ENCODE measurements at regions of chr3 and their contacts with region 1.

Region 1: DNA sequence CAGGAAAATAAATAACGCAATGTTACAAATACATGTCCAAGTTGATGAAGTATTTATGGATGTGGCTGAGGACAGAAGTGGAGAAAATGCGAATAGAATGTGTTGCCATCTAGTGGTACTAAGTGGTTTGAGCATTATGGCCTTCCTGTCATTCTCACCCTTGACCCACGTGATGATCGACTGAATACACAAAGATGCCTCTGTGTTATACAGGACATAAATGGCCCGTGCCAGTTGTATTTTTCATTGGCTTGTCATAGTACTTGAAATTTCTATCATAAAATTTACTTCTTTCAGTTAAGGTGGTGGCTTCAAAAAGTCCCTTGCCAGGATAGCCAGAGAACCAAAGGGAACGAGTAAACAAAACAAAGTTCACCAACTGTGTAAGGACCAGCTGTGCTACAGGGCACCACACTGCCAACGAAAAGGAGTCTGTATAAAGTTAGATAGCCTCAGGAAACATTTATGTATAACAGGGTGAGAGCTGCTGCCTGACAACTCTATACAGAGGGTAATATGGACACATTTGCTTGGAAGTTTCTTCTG is 103.7 kb downstream of the MYH15 start:
- DNase-seq: peak in 1 of 2 donors; percentile 79
- ATAC-seq: peak; percentile 92 to 99 (median 99)
- H3K4me3 ChIP-seq: no peak overlapping the region
- H3K4me3 Mint-ChIP-seq: no peak overlapping the region
- H3K27ac ChIP-seq: no peak overlapping the region
- H3K27ac Mint-ChIP-seq: peak overlapping the region in 1 of 2 donors; percentile 24
- H3K4me1 ChIP-seq: no peaks in the 10 kb centered on the region
- H3K4me1 Mint-ChIP-seq: peaks cover 6% of the 10 kb centered on the region in 2 donors
- H3K27me3 ChIP-seq: no peaks in the 10 kb centered on the region
- H3K27me3 Mint-ChIP-seq: peaks cover 0 to 5% of the 10 kb centered on the region in 2 donors
- CTCF ChIP-seq: peak; percentile 70

Region 2: DNA sequence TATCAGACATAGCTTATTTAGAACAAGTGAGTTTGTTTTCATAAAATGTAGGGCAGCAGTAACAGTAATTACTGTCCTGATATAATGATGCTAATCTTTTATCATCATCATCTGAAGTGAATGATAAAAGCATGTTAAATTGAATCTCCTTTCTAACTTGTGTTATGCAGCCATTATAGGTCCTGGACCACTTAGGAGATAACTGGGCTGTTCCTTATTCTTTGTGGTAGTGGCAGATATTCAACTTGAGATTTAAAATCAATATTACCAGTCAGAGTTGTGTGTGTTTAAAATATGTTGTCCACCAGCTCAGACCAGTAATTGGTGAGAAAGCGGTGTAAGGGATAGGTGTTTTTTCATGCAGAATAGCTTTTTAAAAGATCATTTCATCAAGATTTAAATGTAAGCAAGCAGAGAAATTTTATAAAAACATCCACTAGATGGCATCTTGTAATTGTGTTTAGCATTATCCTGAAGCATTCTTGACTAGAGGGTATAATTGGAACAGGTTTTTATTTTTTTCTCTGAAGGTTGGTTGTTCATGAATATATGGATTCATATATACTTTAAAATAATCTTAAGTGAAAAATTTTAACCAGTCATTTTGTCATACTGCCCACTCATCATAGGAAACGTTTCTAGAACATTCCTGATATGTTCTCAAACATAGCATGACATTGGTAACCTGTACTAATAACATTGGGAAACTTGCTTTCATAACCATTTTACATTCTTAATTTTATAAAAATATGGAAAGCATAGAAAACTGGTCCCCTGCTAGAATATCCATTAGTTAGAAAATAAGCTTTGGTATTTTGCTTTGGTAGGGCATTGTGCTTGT is 730.0 kb before region 1 on chr3:
- intact Hi-C with region 1: loop called (anchors 10 kb)
- DNase-seq: peak in 1 of 2 donors; percentile 45
- ATAC-seq: peak in 2 of 3 donors; percentile 34 to 50
- H3K4me3 ChIP-seq: no peak overlapping the region
- H3K4me3 Mint-ChIP-seq: no peak overlapping the region
- H3K27ac ChIP-seq: no peak overlapping the region
- H3K27ac Mint-ChIP-seq: no peak overlapping the region
- H3K4me1 ChIP-seq: no peaks in the 10 kb centered on the region
- H3K4me1 Mint-ChIP-seq: peaks cover 31 to 38% of the 10 kb centered on the region in 2 donors
- H3K27me3 ChIP-seq: no peaks in the 10 kb centered on the region
- H3K27me3 Mint-ChIP-seq: no peaks in the 10 kb centered on the region
- CTCF ChIP-seq: peak; percentile 59

Region 3: DNA sequence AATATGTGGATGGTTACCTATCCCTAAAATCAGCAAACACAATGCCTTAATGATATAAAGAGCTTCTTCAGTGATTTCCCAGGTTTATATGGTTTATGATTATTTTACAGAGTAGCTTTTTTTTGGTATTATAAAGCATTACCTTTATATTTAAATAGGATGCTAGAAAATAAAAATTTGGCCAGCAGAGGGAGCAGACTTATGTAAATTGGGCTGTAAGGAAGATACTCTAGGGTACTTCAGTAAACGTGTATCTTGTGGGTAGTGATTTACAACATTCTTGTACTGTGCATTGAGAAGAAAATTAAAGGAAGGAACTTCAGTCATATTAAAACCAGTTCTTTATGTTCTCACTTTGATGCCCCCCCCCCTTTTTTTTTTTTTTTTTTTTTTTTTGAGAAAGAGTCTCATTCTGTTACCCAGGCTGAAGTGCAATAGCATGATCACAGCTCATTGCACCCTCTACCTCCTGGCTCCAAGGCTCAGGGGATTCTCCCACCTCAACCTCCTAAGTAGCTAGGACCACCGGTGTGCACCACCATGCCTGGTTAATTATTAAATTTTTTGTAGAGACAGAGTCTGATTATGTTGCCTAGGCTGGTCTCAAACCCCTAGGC is 716.1 kb before region 1 on chr3:
- intact Hi-C with region 1: loop called (anchors 2 kb)
- DNase-seq: peak in 1 of 2 donors; percentile 74
- ATAC-seq: peak; percentile 49 to 72 (median 60)
- H3K4me3 ChIP-seq: no peak overlapping the region
- H3K4me3 Mint-ChIP-seq: no peak overlapping the region
- H3K27ac ChIP-seq: no peak overlapping the region
- H3K27ac Mint-ChIP-seq: no peak overlapping the region
- H3K4me1 ChIP-seq: no peaks in the 10 kb centered on the region
- H3K4me1 Mint-ChIP-seq: peaks cover 2 to 14% of the 10 kb centered on the region in 2 donors
- H3K27me3 ChIP-seq: no peaks in the 10 kb centered on the region
- H3K27me3 Mint-ChIP-seq: no peaks in the 10 kb centered on the region
- CTCF ChIP-seq: peak; percentile 62

Region 4: GRCh38 chr3:107927361-107928083 is 479.2 kb before region 1 on chr3:
- intact Hi-C with region 1: loop called (anchors 1 kb)
- DNase-seq: peak; percentile 55 to 80
- ATAC-seq: peak; percentile 85 to 97 (median 95)
- H3K4me3 ChIP-seq: peak overlapping the region; percentile 47
- H3K4me3 Mint-ChIP-seq: peak overlapping the region; percentile 86
- H3K27ac ChIP-seq: no peak overlapping the region
- H3K27ac Mint-ChIP-seq: peak overlapping the region in 1 of 2 donors; percentile 63
- H3K4me1 ChIP-seq: peaks cover 10% of the 10 kb centered on the region
- H3K4me1 Mint-ChIP-seq: peaks cover 8 to 14% of the 10 kb centered on the region in 2 donors
- H3K27me3 ChIP-seq: peaks cover 12% of the 10 kb centered on the region
- H3K27me3 Mint-ChIP-seq: peaks cover 12 to 19% of the 10 kb centered on the region in 2 donors
- CTCF ChIP-seq: peak; percentile 96

Region 5: GRCh38 chr3:108062051-108062450 is 344.7 kb before region 1 on chr3:
- intact Hi-C with region 1: loop called (anchors 10 kb)
- DNase-seq: no peak
- ATAC-seq: peak in 2 of 3 donors; percentile 36 to 49
- H3K4me3 ChIP-seq: no peak overlapping the region
- H3K4me3 Mint-ChIP-seq: no peak overlapping the region
- H3K27ac ChIP-seq: no peak overlapping the region
- H3K27ac Mint-ChIP-seq: peak overlapping the region; percentile 56 to 70
- H3K4me1 ChIP-seq: peaks cover 4% of the 10 kb centered on the region
- H3K4me1 Mint-ChIP-seq: peaks cover 58 to 75% of the 10 kb centered on the region in 2 donors
- H3K27me3 ChIP-seq: no peaks in the 10 kb centered on the region
- H3K27me3 Mint-ChIP-seq: no peaks in the 10 kb centered on the region
- CTCF ChIP-seq: no peak

Region 6: GRCh38 chr3:108153451-108153981 is 253.2 kb before region 1 on chr3:
- intact Hi-C with region 1: loop called (anchors 1 kb)
- DNase-seq: peak in 1 of 2 donors; percentile 70
- ATAC-seq: peak in 2 of 3 donors; percentile 44 to 54
- H3K4me3 ChIP-seq: no peak overlapping the region
- H3K4me3 Mint-ChIP-seq: no peak overlapping the region
- H3K27ac ChIP-seq: no peak overlapping the region
- H3K27ac Mint-ChIP-seq: no peak overlapping the region
- H3K4me1 ChIP-seq: no peaks in the 10 kb centered on the region
- H3K4me1 Mint-ChIP-seq: peaks cover 28 to 48% of the 10 kb centered on the region in 2 donors
- H3K27me3 ChIP-seq: no peaks in the 10 kb centered on the region
- H3K27me3 Mint-ChIP-seq: no peaks in the 10 kb centered on the region
- CTCF ChIP-seq: peak; percentile 35

Region 7: GRCh38 chr3:108538083-108538482 is 131.3 kb after region 1 on chr3:
- intact Hi-C with region 1: no loop called
- DNase-seq: no peak
- ATAC-seq: no peak
- H3K4me3 ChIP-seq: no peak overlapping the region
- H3K4me3 Mint-ChIP-seq: no peak overlapping the region
- H3K27ac ChIP-seq: no peak overlapping the region
- H3K27ac Mint-ChIP-seq: no peak overlapping the region
- H3K4me1 ChIP-seq: no peaks in the 10 kb centered on the region
- H3K4me1 Mint-ChIP-seq: no peaks in the 10 kb centered on the region
- H3K27me3 ChIP-seq: no peaks in the 10 kb centered on the region
- H3K27me3 Mint-ChIP-seq: peaks cover 3 to 8% of the 10 kb centered on the region in 2 donors
- CTCF ChIP-seq: no peak